ENCODE measurements at regions of chr15 and their contacts with region 1.

Region 1: GRCh38 chr15:55846116-55846707 is 103.3 kb upstream of the PRTG start:
- DNase-seq: peak; percentile 71
- H3K4me3 ChIP-seq: no peak overlapping the region
- H3K27ac ChIP-seq: no peak overlapping the region
- H3K27me3 ChIP-seq: no peaks in the 10 kb centered on the region
- CTCF ChIP-seq: peak; percentile 87

Region 2: DNA sequence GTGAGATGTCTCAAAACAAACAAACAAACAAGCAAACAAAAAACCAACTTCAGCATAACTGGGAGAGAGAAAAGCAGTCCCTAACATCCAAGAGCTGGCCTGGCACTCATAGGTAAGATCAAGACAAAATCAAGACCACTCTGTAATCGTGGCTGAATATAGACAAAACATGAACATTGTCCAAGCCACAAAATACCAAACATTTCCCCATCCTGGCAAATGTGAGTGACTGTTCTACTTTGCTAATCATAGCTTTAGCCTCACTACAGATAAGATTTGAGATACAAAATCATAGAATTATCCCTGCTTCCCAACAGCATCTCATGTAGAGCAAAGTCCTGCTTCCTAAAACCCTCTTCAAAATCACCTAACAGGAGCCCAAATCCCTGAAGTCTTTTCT is 13.5 kb after region 1 on chr15:
- CTCF ChIA-PET with region 1: interaction called, 15 read pairs
- POLR2A ChIA-PET with region 1: no interaction called
- DNase-seq: no peak
- H3K4me3 ChIP-seq: no peak overlapping the region
- H3K27ac ChIP-seq: no peak overlapping the region
- H3K27me3 ChIP-seq: no peaks in the 10 kb centered on the region
- CTCF ChIP-seq: no peak

Measured in AG04450 (cell line).